Psoas muscle (tissue), 8 donors: ENCODE measurements at regions of chr3 and their contacts with region 1.

Region 1: DNA sequence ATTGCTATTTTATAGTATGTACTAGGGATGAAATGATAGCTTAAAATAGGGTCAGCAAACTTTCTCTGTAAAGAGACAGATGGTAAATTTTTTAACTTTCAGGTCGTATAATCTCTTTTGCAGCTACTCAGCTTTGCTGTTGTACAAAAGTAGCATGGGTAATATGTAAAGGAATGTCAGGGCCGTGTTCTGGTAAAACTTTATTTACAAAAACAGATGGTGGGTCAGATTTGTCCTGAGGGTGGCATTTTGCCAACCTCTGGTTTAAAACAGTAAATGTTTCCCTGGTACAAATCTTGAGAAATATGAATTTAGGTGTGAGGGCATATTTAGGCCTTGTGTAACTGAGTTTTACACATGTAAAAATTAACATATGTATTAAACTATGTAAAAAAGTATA is 18.6 kb downstream of the NMD3 start:
- DNase-seq: no peak
- ATAC-seq: no peak
- H3K4me3 ChIP-seq: no peak overlapping the region
- H3K27ac ChIP-seq: no peak overlapping the region
- H3K4me1 ChIP-seq: no peaks in the 10 kb centered on the region
- H3K27me3 ChIP-seq: no peaks in the 10 kb centered on the region
- CTCF ChIP-seq: no peak

Region 2: DNA sequence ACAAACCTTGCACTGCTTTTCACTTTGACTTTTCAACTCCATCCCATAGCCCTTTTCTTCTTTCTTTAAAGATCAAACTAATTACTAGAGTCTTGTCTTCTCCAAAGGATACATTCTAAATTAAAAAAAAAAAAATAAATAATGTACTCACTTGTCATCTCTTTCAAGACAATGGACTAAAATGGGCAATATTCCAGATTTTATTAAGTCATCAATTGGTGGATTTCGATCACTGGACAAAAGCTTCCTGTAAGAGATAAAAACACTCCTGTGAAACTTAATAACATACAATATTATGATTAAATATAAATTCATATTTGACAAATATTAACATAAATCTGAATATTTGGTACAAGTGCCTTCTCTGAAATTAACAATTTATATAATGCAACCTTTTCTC is 708.4 kb before region 1 on chr3:
- intact Hi-C with region 1: loop called in 1 of 2 experiments (anchors 10 kb)
- DNase-seq: no peak
- ATAC-seq: no peak
- H3K4me3 ChIP-seq: no peak overlapping the region
- H3K27ac ChIP-seq: no peak overlapping the region
- H3K4me1 ChIP-seq: peaks cover 8% of the 10 kb centered on the region
- H3K27me3 ChIP-seq: no peaks in the 10 kb centered on the region
- CTCF ChIP-seq: no peak

Region 3: DNA sequence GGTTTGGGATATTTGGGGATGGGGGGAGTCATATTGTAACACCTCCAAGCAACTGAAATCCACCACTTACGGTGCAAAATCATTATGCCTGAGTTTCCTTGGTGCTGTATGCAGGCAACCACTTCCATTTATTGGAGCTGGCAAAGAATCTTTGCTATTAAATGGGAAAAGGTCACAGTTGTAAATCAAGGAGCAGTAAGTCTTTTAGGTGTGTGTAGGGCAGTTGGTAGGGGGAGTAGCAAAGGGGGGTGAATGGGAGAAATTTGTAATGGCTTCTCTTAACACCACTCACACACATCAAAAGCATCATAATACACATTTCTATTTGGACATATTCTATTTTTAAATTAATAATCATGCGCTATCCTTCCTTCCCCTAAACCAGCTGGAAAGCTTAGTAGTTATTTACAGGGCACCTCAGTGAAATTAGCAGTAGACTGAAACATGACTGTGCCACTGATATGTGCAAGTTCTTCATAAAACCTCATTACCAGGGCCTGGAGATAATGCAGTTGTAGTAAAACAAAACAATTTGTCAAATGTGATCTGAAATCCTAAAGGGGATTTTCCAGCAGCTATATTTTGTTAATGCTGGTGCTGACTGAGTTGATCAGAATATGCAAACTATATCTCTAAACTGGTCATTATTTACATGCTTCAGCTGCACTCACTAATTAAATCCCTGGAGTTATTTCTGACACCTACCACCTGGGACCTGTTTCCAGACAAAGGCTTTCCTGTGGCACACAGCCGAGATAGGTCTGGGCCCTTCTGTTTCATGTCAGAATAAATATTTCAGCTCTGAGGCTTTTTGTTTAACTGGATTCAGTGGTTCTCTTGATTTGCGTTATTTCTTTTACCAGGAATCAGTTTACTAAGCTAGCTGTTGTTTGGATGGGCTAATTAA is 224.6 kb before region 1 on chr3:
- intact Hi-C with region 1: no loop called
- DNase-seq: no peak
- ATAC-seq: peak in 1 of 4 donors; percentile 26
- H3K4me3 ChIP-seq: no peak overlapping the region
- H3K27ac ChIP-seq: no peak overlapping the region
- H3K4me1 ChIP-seq: no peaks in the 10 kb centered on the region
- H3K27me3 ChIP-seq: no peaks in the 10 kb centered on the region
- CTCF ChIP-seq: no peak